ENCODE measurements at regions of chr19 and their contacts with region 1.

Region 1: GRCh38 chr19:21202865-21203494 is 61.1 kb downstream of the ZNF431 start:
- DNase-seq: no peak
- H3K4me3 ChIP-seq: no peak overlapping the region
- H3K27ac ChIP-seq: no peak overlapping the region
- H3K4me1 ChIP-seq: no peaks in the 10 kb centered on the region
- H3K27me3 ChIP-seq: no peaks in the 10 kb centered on the region
- CTCF ChIP-seq: peak; percentile 32 to 66 (median 63)
- POLR2A ChIP-seq: no peak

Region 2: DNA sequence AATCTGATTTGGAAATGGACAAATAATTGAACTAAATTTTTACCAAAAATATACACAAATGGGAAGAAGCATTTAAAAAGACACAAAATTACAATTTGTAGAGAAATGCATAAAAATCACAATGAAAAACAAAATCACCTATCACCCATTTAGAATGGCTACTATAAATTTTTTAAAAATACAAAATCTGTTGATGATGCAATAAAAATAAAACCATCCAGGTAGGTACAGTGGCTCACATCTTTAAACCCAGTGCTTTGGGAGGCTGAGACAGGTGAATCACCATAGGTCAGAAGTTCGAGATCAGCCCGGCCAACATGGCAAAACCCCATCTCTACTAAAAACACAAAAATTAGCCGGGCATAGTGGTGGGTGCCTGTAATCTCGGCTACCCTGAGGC is 609.5 kb after region 1 on chr19:
- intact Hi-C with region 1: loop called (anchors 5 kb)
- DNase-seq: no peak
- H3K4me3 ChIP-seq: no peak overlapping the region
- H3K27ac ChIP-seq: no peak overlapping the region
- H3K4me1 ChIP-seq: no peaks in the 10 kb centered on the region
- H3K27me3 ChIP-seq: no peaks in the 10 kb centered on the region
- CTCF ChIP-seq: no peak
- POLR2A ChIP-seq: no peak